ENCODE measurements at regions of chr19 and their contacts with region 1.

Region 1: GRCh38 chr19:34336781-34337271 is 28.2 kb upstream of the GPI start:
- DNase-seq: peak in 7 of 9 experiments; percentile 20 to 76 (median 56)
- ATAC-seq: peak; percentile 70
- H3K4me3 ChIP-seq: no peak overlapping the region
- H3K4me3 Mint-ChIP-seq: no peak overlapping the region
- H3K27ac ChIP-seq: no peak overlapping the region
- H3K27ac Mint-ChIP-seq: peak overlapping the region; percentile 57
- H3K4me1 ChIP-seq: peaks cover 8% of the 10 kb centered on the region
- H3K4me1 Mint-ChIP-seq: peaks cover 7% of the 10 kb centered on the region
- H3K27me3 ChIP-seq: no peaks in the 10 kb centered on the region
- H3K27me3 Mint-ChIP-seq: no peaks in the 10 kb centered on the region
- CTCF ChIP-seq: peak; percentile 92

Region 2: GRCh38 chr19:34323433-34324204 is 13.2 kb before region 1 on chr19:
- CTCF ChIA-PET with region 1: no interaction called
- POLR2A ChIA-PET with region 1: no interaction called
- intact Hi-C with region 1: no loop called
- DNase-seq: no peak
- ATAC-seq: no peak
- H3K4me3 ChIP-seq: no peak overlapping the region
- H3K4me3 Mint-ChIP-seq: no peak overlapping the region
- H3K27ac ChIP-seq: no peak overlapping the region
- H3K27ac Mint-ChIP-seq: no peak overlapping the region
- H3K4me1 ChIP-seq: peaks cover 5% of the 10 kb centered on the region
- H3K4me1 Mint-ChIP-seq: peaks cover 11% of the 10 kb centered on the region
- H3K27me3 ChIP-seq: no peaks in the 10 kb centered on the region
- H3K27me3 Mint-ChIP-seq: no peaks in the 10 kb centered on the region
- CTCF ChIP-seq: no peak

Region 3: DNA sequence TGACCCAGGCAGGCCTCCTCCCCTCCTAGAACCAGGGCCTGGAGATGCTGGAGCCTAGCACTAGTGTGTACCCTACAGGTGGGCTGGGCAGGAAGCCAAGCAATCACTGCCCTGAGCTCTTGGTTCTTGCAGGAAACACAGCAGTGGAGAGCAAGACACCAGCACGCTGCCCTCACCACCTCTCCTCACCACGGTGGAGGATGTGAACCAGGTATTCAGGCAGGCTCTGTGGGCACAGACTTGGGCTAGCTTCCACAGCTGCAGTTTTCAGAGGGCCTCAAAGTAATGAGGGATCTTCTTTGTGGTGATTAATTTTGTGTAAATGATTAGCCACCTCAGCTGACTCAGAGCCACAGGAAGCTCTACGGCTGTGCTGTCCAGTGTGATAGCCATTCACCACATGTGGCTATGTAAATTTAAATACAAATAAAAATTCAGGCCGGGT is 14.6 kb after region 1 on chr19:
- CTCF ChIA-PET with region 1: interaction called, 21 read pairs
- POLR2A ChIA-PET with region 1: interaction called, 3 read pairs
- intact Hi-C with region 1: loop called in 1 of 2 experiments (anchors 2 kb)
- DNase-seq: peak in 6 of 9 experiments; percentile 13 to 56 (median 38)
- ATAC-seq: no peak
- H3K4me3 ChIP-seq: no peak overlapping the region
- H3K4me3 Mint-ChIP-seq: peak overlapping the region; percentile 37
- H3K27ac ChIP-seq: peak overlapping the region; percentile 7 to 18
- H3K27ac Mint-ChIP-seq: peak overlapping the region; percentile 89
- H3K4me1 ChIP-seq: peaks cover 30% of the 10 kb centered on the region
- H3K4me1 Mint-ChIP-seq: peaks cover 20% of the 10 kb centered on the region
- H3K27me3 ChIP-seq: no peaks in the 10 kb centered on the region
- H3K27me3 Mint-ChIP-seq: no peaks in the 10 kb centered on the region
- CTCF ChIP-seq: no peak